Left lung (tissue), 14 donors: ENCODE measurements at regions of chr2 and their contacts with region 1.

Region 1: GRCh38 chr2:176140513-176141317 is 10.6 kb upstream of the HOXD4 start:
- DNase-seq: peak; percentile 54 to 89 (median 80)
- ATAC-seq: peak; percentile 97
- H3K4me3 ChIP-seq: peak overlapping the region; percentile 18 to 31
- H3K27ac ChIP-seq: no peak overlapping the region
- H3K4me1 ChIP-seq: peaks cover 12 to 20% of the 10 kb centered on the region in 2 donors
- H3K27me3 ChIP-seq: peaks cover 69 to 100% of the 10 kb centered on the region in 2 donors
- CTCF ChIP-seq: peak; percentile 81

Region 2: DNA sequence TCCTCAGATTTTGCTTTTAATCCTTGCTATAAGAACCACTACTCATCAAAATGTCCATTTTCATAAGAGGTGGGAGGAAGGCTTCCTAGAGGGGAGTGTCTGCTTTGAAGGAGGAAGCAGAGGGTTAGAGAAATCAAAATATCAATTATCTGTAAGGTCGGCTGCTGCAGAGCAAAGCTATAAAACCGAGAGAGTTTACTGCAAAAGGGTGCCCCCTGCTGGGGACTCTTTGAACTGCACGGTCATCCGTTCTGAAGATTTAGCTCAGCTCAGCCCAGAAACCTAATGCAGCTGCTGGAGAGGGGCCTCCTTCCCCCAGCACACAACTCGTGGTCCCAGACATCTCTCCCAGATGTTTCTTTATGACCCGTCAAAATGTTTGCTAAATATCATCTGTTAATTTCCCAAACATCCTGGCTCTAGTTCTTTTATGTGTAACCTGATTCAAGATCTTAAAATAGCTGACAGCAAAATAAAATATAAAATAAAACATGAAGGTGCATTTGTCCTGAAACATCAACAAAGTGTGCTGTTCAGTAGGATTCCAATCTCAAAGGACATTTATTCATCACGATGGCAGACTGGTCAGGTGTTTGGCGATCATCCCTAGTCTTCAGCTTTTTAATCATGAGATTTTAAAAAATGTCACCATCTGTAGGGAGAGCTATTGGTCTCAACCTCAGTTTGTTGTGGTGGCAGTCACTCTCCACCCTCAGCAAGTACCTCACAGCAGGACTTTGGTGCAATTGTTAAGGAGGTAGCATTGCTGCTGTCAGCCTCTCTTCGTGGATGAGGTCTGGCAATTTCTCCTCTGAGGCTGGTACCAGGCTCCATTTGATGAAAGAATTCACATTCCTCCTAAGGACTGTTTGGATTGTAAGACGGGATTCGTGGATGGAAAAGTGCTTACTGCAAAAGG is 314.4 kb after region 1 on chr2:
- intact Hi-C with region 1: loop called in 1 of 2 experiments (anchors 10 kb)
- DNase-seq: peak; percentile 56 to 72 (median 70)
- ATAC-seq: peak; percentile 96
- H3K4me3 ChIP-seq: no peak overlapping the region
- H3K27ac ChIP-seq: no peak overlapping the region
- H3K4me1 ChIP-seq: no peaks in the 10 kb centered on the region
- H3K27me3 ChIP-seq: peaks cover 0 to 20% of the 10 kb centered on the region in 2 donors
- CTCF ChIP-seq: peak; percentile 90 to 96

Region 3: GRCh38 chr2:176554101-176555048 is 413.7 kb after region 1 on chr2:
- intact Hi-C with region 1: loop called in 1 of 2 experiments (anchors 5 kb)
- DNase-seq: peak in 2 of 4 donors; percentile 81 to 84
- ATAC-seq: peak; percentile 89
- H3K4me3 ChIP-seq: peak overlapping the region; percentile 12 to 28
- H3K27ac ChIP-seq: peak overlapping the region in 1 of 2 donors; percentile 13
- H3K4me1 ChIP-seq: peaks cover 2 to 12% of the 10 kb centered on the region in 2 donors
- H3K27me3 ChIP-seq: peaks cover 14 to 68% of the 10 kb centered on the region in 2 donors
- CTCF ChIP-seq: peak; percentile 55 to 80